ENCODE measurements at regions of chr2 and their contacts with region 1.

Region 1: DNA sequence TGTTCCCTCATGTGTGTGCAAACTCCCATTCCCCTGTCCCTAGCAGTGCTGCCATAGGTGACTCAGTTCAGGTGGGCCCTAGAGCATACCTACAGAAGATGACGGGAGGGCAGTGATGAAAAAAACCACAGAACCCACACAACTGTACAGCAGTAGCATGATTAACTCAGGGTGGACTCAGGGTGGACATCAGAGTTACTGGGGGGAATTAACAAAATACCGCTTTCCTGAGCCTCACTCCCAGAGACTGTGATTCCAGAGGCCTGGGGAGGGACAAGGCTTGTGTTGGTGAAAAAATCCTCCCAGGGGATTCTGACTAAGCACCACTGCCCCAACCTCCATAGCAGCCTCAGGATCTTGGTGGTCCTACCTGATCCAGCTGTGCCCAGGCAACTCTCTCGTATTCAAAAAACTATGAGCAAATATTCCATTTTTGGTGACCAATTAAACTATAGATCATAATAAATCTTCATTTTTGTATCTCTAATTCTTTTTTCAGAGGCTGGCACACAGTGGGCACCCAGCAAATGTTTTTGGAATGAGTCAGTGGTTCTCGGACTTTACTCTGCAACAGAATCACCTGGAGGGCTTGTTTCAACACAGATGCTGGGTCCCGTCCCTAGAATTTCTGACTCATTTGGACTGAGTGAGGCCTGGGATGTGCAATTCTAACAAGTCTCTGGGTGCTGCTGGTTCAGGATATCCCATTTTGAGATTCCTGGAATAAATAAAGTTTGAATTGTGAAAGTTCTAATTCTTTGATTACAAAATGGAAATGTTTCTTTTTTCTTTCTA is 84.1 kb upstream of the NABP1 start:
- DNase-seq: peak; percentile 99
- H3K4me3 Mint-ChIP-seq: peak overlapping the region; percentile 14
- H3K27ac Mint-ChIP-seq: peak overlapping the region; percentile 92
- H3K4me1 Mint-ChIP-seq: peaks cover 6% of the 10 kb centered on the region
- H3K27me3 Mint-ChIP-seq: no peaks in the 10 kb centered on the region
- CTCF ChIP-seq: no peak

Region 2: DNA sequence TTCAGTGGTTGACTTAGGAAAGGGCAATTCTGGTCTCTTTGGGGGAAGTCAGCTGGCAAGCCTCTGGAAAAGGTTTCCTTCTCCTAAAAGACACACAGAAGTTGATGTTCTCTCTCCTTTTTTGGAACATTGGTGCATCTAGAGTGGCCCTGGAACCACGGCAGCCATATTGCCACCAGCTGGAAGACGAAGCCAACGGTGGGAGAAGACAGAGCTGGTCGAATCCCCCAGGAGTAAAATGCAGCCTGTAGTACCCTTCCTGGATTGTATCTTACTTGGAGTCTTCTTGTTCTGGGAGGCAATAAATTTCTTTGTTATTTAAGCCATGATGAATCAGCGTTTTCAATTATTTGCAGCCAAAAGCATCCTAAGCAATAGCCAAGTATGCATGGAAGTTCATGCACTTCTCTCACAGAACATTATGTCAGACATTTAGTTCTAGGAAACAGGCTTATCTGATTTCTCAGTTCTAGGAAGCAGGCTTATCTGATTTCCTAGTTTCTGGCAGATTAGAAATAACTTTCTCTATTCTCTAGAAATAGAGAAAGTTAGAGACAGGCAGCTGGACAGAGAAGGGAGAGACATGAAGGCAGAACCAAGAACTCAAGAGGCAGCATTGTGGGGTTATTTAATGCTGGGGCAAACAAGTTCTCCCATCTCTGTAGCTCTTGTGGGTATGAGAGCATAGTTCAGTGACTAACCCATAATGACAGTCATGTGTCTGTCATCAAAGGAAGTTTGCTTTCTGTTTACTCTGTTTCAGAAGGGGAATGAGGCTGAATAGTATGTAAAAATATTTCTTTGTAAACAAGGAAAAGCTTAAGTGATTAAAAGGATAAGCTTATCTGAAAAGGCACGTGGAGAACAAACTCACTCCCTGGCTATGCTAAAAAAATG is 43.6 kb after region 1 on chr2:
- CTCF ChIA-PET with region 1: no interaction called
- POLR2A ChIA-PET with region 1: interaction called, 7 read pairs
- intact Hi-C with region 1: loop called (anchors 5 kb)
- DNase-seq: peak; percentile 36
- H3K4me3 Mint-ChIP-seq: no peak overlapping the region
- H3K27ac Mint-ChIP-seq: peak overlapping the region; percentile 61
- H3K4me1 Mint-ChIP-seq: peaks cover 30% of the 10 kb centered on the region
- H3K27me3 Mint-ChIP-seq: no peaks in the 10 kb centered on the region
- CTCF ChIP-seq: no peak